Activated B cell treated with CpG ODN at 0.5 μM for 24 hours (primary cell): ENCODE measurements at regions of chr5 and their contacts with region 1.

Region 1: GRCh38 chr5:157603333-157604190 is 28.0 kb upstream of the ADAM19 start:
- DNase-seq: no peak
- ATAC-seq: peak; percentile 48
- H3K4me3 Mint-ChIP-seq: peak overlapping the region; percentile 25
- H3K27ac Mint-ChIP-seq: peak overlapping the region; percentile 83
- H3K4me1 Mint-ChIP-seq: peaks cover 85% of the 10 kb centered on the region
- H3K27me3 Mint-ChIP-seq: no peaks in the 10 kb centered on the region
- CTCF ChIP-seq: no peak

Region 2: GRCh38 chr5:157233515-157233914 is 370.0 kb before region 1 on chr5:
- CTCF ChIA-PET with region 1: no interaction called
- POLR2A ChIA-PET with region 1: no interaction called
- intact Hi-C with region 1: no loop called
- DNase-seq: no peak
- ATAC-seq: no peak
- H3K4me3 Mint-ChIP-seq: no peak overlapping the region
- H3K27ac Mint-ChIP-seq: no peak overlapping the region
- H3K4me1 Mint-ChIP-seq: no peaks in the 10 kb centered on the region
- H3K27me3 Mint-ChIP-seq: no peaks in the 10 kb centered on the region
- CTCF ChIP-seq: no peak

Region 3: DNA sequence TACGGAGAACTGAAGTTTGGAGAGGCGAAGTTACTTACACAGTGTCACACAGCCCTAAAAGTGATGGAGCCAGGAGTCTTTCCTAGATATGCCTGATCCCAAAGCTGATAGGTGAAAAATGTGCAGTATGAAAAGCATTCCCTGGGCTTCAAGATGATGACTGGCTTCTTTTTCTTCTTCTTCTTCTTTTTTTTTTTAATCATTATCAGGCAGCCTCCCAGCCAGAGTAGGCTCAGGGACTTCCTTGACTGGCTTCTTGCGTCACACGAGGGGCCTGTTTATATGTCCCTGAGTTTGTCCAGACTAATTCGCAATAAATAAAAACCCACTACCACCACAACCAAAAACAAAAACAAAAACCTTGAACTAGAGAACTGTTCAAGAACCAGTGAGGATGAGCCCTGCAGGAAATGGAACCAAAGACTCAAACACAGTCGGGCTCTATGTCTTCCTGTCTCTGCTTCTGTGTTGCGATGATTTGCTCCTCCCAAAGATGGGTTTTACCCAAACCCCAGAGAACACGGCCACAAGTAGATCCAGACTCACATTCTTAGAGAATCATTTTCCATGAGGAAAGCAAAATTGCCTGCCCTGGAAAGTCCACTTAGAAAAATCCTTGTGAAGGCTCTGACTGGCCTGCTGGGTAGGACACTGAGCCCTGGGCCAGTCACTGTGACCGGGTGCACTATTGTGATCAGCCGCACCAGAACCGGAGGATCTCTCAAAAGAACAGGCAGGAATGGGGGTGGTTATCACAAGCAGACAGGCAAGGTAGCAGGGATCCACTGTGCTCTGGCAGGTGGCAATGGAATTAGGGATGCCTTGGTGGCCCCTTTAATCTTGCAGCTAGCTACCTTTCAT is 10.1 kb after region 1 on chr5:
- CTCF ChIA-PET with region 1: no interaction called
- POLR2A ChIA-PET with region 1: no interaction called
- intact Hi-C with region 1: loop called (anchors 1 kb)
- DNase-seq: no peak
- ATAC-seq: no peak
- H3K4me3 Mint-ChIP-seq: no peak overlapping the region
- H3K27ac Mint-ChIP-seq: peak overlapping the region; percentile 71
- H3K4me1 Mint-ChIP-seq: peaks cover 40% of the 10 kb centered on the region
- H3K27me3 Mint-ChIP-seq: no peaks in the 10 kb centered on the region
- CTCF ChIP-seq: no peak